ENCODE measurements at regions of chr17 and their contacts with region 1.

Region 1: GRCh38 chr17:34091975-34092374 is 163.1 kb upstream of the CCL2 start:
- DNase-seq: no peak
- ATAC-seq: no peak
- H3K4me3 ChIP-seq: no peak overlapping the region
- H3K27ac ChIP-seq: no peak overlapping the region
- H3K4me1 ChIP-seq: no peaks in the 10 kb centered on the region
- H3K27me3 ChIP-seq: peaks cover 0 to 23% (median 0%) of the 10 kb centered on the region in 9 donors
- CTCF ChIP-seq: no peak
- POLR2A ChIP-seq: no peak

Region 2: GRCh38 chr17:34140006-34140405 is 48.0 kb after region 1 on chr17:
- intact Hi-C with region 1: loop called in 2 of 10 experiments (anchors 5 to 10 kb)
- DNase-seq: no peak
- ATAC-seq: no peak
- H3K4me3 ChIP-seq: no peak overlapping the region
- H3K27ac ChIP-seq: no peak overlapping the region
- H3K4me1 ChIP-seq: no peaks in the 10 kb centered on the region
- H3K27me3 ChIP-seq: peaks cover 0 to 15% (median 3%) of the 10 kb centered on the region in 9 donors
- CTCF ChIP-seq: no peak
- POLR2A ChIP-seq: no peak